ENCODE measurements at regions of chr17 and their contacts with region 1.

Region 1: GRCh38 chr17:46144246-46144645 is 49.0 kb downstream of the KANSL1 start:
- DNase-seq: no peak
- ATAC-seq: no peak
- H3K4me3 Mint-ChIP-seq: no peak overlapping the region
- H3K27ac Mint-ChIP-seq: no peak overlapping the region
- H3K4me1 Mint-ChIP-seq: peaks cover 79% of the 10 kb centered on the region
- H3K27me3 Mint-ChIP-seq: no peaks in the 10 kb centered on the region

Region 2: DNA sequence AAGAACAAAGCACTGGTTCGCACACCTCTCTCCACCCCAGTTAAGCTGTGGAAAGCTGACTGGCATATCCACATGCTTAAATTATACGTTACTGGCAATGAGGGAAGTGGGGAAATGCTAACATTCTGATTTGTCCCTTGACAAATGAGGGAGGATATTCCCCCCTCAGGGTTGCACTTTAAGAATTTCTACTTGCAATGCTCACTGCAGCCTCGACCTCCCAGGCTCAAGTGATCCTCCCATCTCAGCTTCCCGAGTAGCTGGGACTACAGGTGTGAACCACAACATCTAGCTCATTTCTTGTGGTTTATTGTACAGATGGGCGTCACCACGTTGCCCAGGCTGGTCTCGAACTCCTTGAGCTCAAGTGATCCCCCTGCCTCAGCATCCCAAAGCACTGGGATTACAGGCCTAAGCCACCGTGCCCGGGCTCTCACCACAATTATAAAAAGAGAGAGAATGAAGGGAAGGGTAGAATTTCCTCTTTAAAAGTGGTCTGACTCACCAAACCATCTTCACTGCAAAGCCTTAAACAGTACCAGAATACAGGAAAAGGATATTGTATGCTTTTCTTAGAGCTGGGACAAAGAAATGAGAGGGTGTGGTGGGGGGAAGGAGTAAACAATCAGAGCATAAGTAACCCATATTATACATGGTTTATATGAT is 10.0 kb after region 1 on chr17:
- CTCF ChIA-PET with region 1: interaction called, 13 read pairs
- DNase-seq: peak; percentile 53
- ATAC-seq: peak; percentile 61
- H3K4me3 Mint-ChIP-seq: peak overlapping the region; percentile 50
- H3K27ac Mint-ChIP-seq: peak overlapping the region; percentile 83
- H3K4me1 Mint-ChIP-seq: peaks cover 76% of the 10 kb centered on the region
- H3K27me3 Mint-ChIP-seq: no peaks in the 10 kb centered on the region

Region 3: GRCh38 chr17:46184696-46185095 is 40.5 kb after region 1 on chr17:
- CTCF ChIA-PET with region 1: interaction called, 17 read pairs
- DNase-seq: no peak
- ATAC-seq: no peak
- H3K4me3 Mint-ChIP-seq: no peak overlapping the region
- H3K27ac Mint-ChIP-seq: no peak overlapping the region
- H3K4me1 Mint-ChIP-seq: peaks cover 77% of the 10 kb centered on the region
- H3K27me3 Mint-ChIP-seq: no peaks in the 10 kb centered on the region

Region 4: DNA sequence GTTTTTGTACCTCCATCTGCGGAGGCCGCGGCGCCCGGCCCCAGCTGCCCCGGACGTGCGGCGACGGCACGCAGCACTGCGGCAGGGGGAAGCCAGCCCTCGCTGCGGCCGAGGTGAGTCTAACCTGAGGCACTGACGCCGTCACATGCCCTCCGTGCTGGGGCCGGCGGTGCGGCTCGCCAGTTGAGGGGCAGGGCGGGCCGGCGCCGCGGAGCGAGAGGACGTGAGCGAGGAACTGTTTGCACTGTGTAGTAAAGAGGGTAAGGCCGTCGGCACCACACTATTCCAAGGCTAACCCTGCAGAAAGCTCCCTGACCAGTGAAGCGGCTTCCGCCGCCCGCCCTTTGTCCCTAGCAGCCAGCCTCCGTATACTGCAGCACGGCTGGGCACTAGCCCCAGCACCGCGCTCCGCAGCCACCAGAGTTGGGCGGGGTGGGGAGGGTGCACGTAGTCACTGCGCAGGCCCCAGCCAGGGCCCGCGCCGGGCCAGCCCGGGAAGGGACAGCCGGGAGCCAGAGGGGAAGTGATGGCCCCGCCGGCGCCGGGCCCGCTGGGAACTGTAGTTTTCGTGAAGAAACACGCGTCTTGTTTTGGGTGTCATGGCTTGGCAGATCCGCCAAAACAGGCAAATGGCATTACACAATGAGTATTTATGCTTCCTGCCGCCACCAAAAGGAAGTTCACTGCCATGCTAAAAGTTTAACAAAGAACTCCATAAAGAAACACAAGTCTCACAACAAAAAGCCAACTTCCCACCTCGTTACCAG is 49.6 kb after region 1 on chr17:
- CTCF ChIA-PET with region 1: interaction called, 17 read pairs
- DNase-seq: peak; percentile 97
- ATAC-seq: peak; percentile 74
- H3K4me3 Mint-ChIP-seq: peak overlapping the region; percentile 85
- H3K27ac Mint-ChIP-seq: peak overlapping the region; percentile 98
- H3K4me1 Mint-ChIP-seq: peaks cover 62% of the 10 kb centered on the region
- H3K27me3 Mint-ChIP-seq: no peaks in the 10 kb centered on the region